ENCODE measurements at regions of chr5 and their contacts with region 1.

Region 1: GRCh38 chr5:177361418-177362291 is 3.9 kb downstream of the RGS14 start:
- DNase-seq: no peak
- H3K4me3 ChIP-seq: no peak overlapping the region
- H3K27ac ChIP-seq: no peak overlapping the region
- H3K4me1 ChIP-seq: 0 out of 2 replicates have a peak, but pooled peaks cover 4% of the 10 kb centered on the region
- H3K27me3 ChIP-seq: peaks cover 14% of the 10 kb centered on the region; the same call in 1 of the 2 replicates
- CTCF ChIP-seq: no peak

Region 2: GRCh38 chr5:176934309-176934930 is 427.2 kb before region 1 on chr5:
- CTCF ChIA-PET with region 1: no interaction called
- POLR2A ChIA-PET with region 1: interaction called, 25 read pairs
- intact Hi-C with region 1: no loop called
- DNase-seq: no peak
- H3K4me3 ChIP-seq: no peak overlapping the region
- H3K27ac ChIP-seq: no peak overlapping the region
- H3K4me1 ChIP-seq: no peaks in the 10 kb centered on the region
- H3K27me3 ChIP-seq: no peaks in the 10 kb centered on the region
- CTCF ChIP-seq: no peak

Region 3: DNA sequence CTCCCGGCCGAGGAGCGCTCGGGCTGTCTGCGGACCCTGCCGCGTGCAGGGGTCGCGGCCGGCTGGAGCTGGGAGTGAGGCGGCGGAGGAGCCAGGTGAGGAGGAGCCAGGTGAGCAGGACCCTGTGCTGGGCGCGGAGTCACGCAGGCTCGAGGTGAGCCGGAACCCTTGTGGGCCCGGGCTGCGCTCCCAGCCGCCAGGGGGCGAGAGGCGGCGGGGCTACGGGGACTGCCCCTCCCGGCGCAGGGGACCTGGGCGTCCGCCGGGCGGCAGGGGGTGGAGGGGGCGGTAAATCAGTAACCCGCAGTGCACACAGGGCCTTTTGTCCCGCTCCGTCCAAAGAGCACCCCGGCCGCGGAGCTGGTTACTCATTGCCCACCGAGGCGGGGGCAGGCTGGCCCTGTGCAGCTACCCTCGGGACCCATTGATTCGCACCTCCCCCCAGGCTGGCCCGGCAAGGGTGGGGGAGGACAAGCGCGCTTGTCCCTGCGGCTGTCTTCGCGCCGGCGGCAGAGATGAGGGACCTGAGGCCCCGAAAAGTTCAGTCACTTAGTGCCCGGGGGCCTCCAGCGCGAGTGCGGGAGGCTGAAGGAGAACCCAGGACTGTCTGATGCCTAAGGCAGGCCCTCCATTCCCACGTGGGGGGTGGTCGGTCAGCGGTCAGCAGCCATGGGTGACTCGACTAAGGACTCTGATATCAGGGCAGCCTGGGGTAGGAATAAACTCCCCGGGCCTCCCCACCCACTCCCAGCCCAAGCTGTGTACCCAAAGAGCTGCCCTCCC is 274.5 kb before region 1 on chr5:
- CTCF ChIA-PET with region 1: no interaction called
- POLR2A ChIA-PET with region 1: no interaction called
- intact Hi-C with region 1: no loop called
- DNase-seq: peak in 1 of 2 experiments; percentile 77
- H3K4me3 ChIP-seq: peak overlapping the region; percentile 65
- H3K27ac ChIP-seq: no peak overlapping the region
- H3K4me1 ChIP-seq: no peaks in the 10 kb centered on the region
- H3K27me3 ChIP-seq: 0 out of 2 replicates have a peak, but pooled peaks cover 5% of the 10 kb centered on the region
- CTCF ChIP-seq: peak; percentile 62

Region 4: GRCh38 chr5:177194274-177194673 is 167.4 kb before region 1 on chr5:
- CTCF ChIA-PET with region 1: no interaction called
- POLR2A ChIA-PET with region 1: no interaction called
- intact Hi-C with region 1: no loop called
- DNase-seq: peak; percentile 72 to 90
- H3K4me3 ChIP-seq: no peak overlapping the region
- H3K27ac ChIP-seq: no peak overlapping the region
- H3K4me1 ChIP-seq: peaks cover 12% of the 10 kb centered on the region
- H3K27me3 ChIP-seq: no peaks in the 10 kb centered on the region
- CTCF ChIP-seq: no peak

Measured in PC-9 (cell line).